Endothelial cell of umbilical vein (primary cell): ENCODE measurements at regions of chr2 and their contacts with region 1.

Region 1: GRCh38 chr2:12797815-12798214 is 81.1 kb downstream of the TRIB2 start:
- DNase-seq: peak; percentile 92
- H3K4me3 ChIP-seq: no peak overlapping the region
- H3K27ac ChIP-seq: peak overlapping the region; percentile 85
- H3K4me1 ChIP-seq: peaks cover 24% of the 10 kb centered on the region
- H3K27me3 ChIP-seq: no peaks in the 10 kb centered on the region
- CTCF ChIP-seq: no peak
- POLR2A ChIP-seq: no peak

Region 2: GRCh38 chr2:12176623-12177454 is 621.0 kb before region 1 on chr2:
- CTCF ChIA-PET with region 1: no interaction called
- POLR2A ChIA-PET with region 1: no interaction called
- dilution Hi-C with region 1: no loop called
- intact Hi-C with region 1: loop called (anchors 10 kb)
- DNase-seq: peak; percentile 49
- H3K4me3 ChIP-seq: no peak overlapping the region
- H3K27ac ChIP-seq: peak overlapping the region; percentile 12
- H3K4me1 ChIP-seq: peaks cover 20% of the 10 kb centered on the region
- H3K27me3 ChIP-seq: no peaks in the 10 kb centered on the region
- CTCF ChIP-seq: no peak
- POLR2A ChIP-seq: no peak

Region 3: DNA sequence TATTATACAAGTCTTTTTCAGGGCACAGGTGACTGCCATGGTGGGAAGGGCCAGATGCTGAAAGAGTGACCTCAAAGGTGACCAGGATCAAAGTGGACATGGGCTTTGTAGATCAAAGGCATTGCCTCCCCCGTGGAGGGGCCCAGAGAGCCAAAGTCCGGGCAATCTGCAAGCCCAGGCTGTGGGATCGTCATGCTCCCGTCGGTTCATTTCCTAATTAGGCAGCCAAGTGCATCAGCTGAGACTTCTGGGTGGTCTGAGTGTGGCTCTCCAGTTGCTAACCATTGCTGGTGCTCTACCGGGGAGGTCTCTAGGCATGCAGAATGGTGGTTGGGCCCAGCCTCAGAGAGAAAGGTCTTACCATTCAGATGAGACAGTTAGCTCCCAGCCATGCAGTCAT is 19.4 kb before region 1 on chr2:
- CTCF ChIA-PET with region 1: no interaction called
- POLR2A ChIA-PET with region 1: no interaction called
- dilution Hi-C with region 1: no loop called
- intact Hi-C with region 1: no loop called
- DNase-seq: no peak
- H3K4me3 ChIP-seq: no peak overlapping the region
- H3K27ac ChIP-seq: no peak overlapping the region
- H3K4me1 ChIP-seq: no peaks in the 10 kb centered on the region
- H3K27me3 ChIP-seq: no peaks in the 10 kb centered on the region
- CTCF ChIP-seq: no peak
- POLR2A ChIP-seq: no peak